ENCODE measurements at regions of chr4 and their contacts with region 1.

Region 1: GRCh38 chr4:139030614-139031235 is 15.1 kb downstream of the NOCT start:
- DNase-seq: peak; percentile 61
- ATAC-seq: peak; percentile 68
- H3K4me3 ChIP-seq: no peak overlapping the region
- H3K27ac ChIP-seq: no peak overlapping the region
- H3K4me1 ChIP-seq: peaks cover 0 to 4% of the 10 kb centered on the region in 2 experiments; a peak in 1 of 4 replicates
- H3K27me3 ChIP-seq: no peaks in the 10 kb centered on the region
- CTCF ChIP-seq: peak; percentile 61 to 83 (median 77); a peak in 5 of 6 replicates
- POLR2A ChIP-seq: no peak
- RAD21 ChIP-seq: peak; percentile 89

Region 2: DNA sequence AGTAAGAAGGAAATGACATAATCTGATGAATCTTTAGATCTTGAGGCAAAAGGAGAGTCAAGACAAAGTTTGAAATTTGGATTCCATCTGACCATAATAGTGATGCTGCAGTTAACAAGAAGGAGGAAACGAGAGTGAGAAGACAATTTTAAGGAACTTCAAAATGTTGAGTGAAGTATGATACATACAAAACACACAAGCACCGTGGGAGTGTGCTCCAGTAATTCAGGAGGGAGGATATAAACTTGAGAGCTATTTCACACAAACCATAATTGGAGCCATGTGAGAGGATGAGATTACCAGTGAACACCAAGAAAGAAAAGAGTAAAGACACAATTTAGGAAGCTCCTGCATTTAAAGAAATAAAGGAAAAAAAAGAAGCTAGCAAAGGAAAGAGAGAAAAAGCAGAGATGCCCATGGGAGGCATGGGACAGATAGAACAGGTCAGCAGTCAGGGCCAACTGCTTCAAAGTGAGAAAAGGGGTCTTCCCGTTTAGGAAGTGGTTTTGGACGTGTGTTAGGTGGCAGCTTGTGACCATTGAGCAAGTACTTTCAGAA is 637.9 kb before region 1 on chr4:
- CTCF ChIA-PET with region 1: no interaction called
- POLR2A ChIA-PET with region 1: no interaction called
- RAD21 ChIA-PET with region 1: no interaction called
- intact Hi-C with region 1: no loop called
- DNase-seq: no peak
- ATAC-seq: no peak
- H3K4me3 ChIP-seq: no peak overlapping the region
- H3K27ac ChIP-seq: no peak overlapping the region
- H3K4me1 ChIP-seq: peaks cover 0 to 3% of the 10 kb centered on the region in 2 experiments; a peak in 1 of 4 replicates
- H3K27me3 ChIP-seq: no peaks in the 10 kb centered on the region
- CTCF ChIP-seq: no peak
- POLR2A ChIP-seq: no peak
- RAD21 ChIP-seq: no peak

Region 3: GRCh38 chr4:139015269-139015947 is 15.3 kb before region 1 on chr4 and contains the start of gene NOCT:
- CTCF ChIA-PET with region 1: interaction called, 29 read pairs
- POLR2A ChIA-PET with region 1: interaction called, 6 read pairs
- RAD21 ChIA-PET with region 1: no interaction called
- intact Hi-C with region 1: no loop called
- DNase-seq: peak; percentile 82
- ATAC-seq: peak; percentile 87
- H3K4me3 ChIP-seq: peak within 1 kb of the TSS; percentile 88 to 93
- H3K27ac ChIP-seq: peak within 1 kb of the TSS; percentile 82
- H3K4me1 ChIP-seq: peaks cover 20 to 49% of the 10 kb centered on the region in 2 experiments
- H3K27me3 ChIP-seq: no peaks in the 10 kb centered on the region
- CTCF ChIP-seq: no peak
- POLR2A ChIP-seq: peak; percentile 91
- RAD21 ChIP-seq: no peak
- total RNA-seq, gene NOCT: 20.4 TPM

Region 4: GRCh38 chr4:139083956-139084803 is 53.5 kb after region 1 on chr4:
- CTCF ChIA-PET with region 1: interaction called, 14 read pairs
- POLR2A ChIA-PET with region 1: no interaction called
- RAD21 ChIA-PET with region 1: interaction called in 1 of 2 experiments, 4 read pairs
- intact Hi-C with region 1: loop called (anchors 2 kb)
- DNase-seq: peak; percentile 86
- ATAC-seq: peak; percentile 74
- H3K4me3 ChIP-seq: peak overlapping the region; percentile 75 to 96
- H3K27ac ChIP-seq: peak overlapping the region; percentile 97
- H3K4me1 ChIP-seq: peaks cover 4 to 21% of the 10 kb centered on the region in 2 experiments; a peak in 3 of 4 replicates
- H3K27me3 ChIP-seq: no peaks in the 10 kb centered on the region
- CTCF ChIP-seq: no peak; a peak in 2 of 6 replicates
- POLR2A ChIP-seq: no peak
- RAD21 ChIP-seq: no peak

Region 5: DNA sequence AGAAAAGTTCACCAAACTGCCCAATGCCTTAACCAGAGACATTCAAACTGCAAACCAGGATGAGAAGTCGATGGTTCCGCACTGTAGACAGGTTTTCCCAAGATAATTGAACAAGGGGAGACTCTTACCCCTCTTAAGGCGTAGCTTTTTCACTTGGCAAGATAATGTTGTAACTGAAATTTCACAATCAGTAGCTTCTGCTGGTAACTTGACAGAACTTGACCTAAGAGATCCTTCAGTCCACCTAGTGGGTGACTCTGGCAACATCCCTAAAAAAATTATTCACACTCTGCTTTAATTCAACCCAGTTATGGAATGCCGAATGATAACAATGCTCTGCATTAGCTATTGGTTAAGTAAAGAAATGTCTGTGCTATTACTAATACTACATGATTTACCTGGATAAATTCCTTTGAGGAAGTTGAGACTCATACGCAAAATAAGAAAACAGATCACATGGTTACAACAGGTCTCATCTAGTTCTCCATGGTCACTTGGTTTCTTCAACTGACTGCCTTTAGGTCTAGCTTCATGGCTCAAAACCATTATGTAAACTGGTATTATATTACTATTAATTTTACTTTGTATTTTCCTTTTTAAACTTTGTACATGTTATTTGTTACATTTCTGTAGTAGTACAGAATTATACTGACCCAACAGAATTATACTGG is 137.2 kb after region 1 on chr4:
- CTCF ChIA-PET with region 1: interaction called, 8 read pairs
- POLR2A ChIA-PET with region 1: no interaction called
- RAD21 ChIA-PET with region 1: interaction called in 1 of 2 experiments, 3 read pairs
- intact Hi-C with region 1: loop called (anchors 1 kb)
- DNase-seq: peak; percentile 35
- ATAC-seq: peak; percentile 80
- H3K4me3 ChIP-seq: no peak overlapping the region
- H3K27ac ChIP-seq: no peak overlapping the region
- H3K4me1 ChIP-seq: peaks cover 3 to 11% of the 10 kb centered on the region in 2 experiments; a peak in 3 of 4 replicates
- H3K27me3 ChIP-seq: no peaks in the 10 kb centered on the region
- CTCF ChIP-seq: peak; percentile 25 to 60 (median 55); a peak in 5 of 6 replicates
- POLR2A ChIP-seq: no peak
- RAD21 ChIP-seq: peak; percentile 54

Region 6: GRCh38 chr4:139229534-139230039 is 198.9 kb after region 1 on chr4:
- CTCF ChIA-PET with region 1: interaction called, 3 read pairs
- POLR2A ChIA-PET with region 1: no interaction called
- RAD21 ChIA-PET with region 1: no interaction called
- intact Hi-C with region 1: loop called (anchors 5 kb)
- DNase-seq: peak; percentile 50
- ATAC-seq: peak; percentile 81
- H3K4me3 ChIP-seq: no peak overlapping the region; a peak in 1 of 4 replicates
- H3K27ac ChIP-seq: no peak overlapping the region
- H3K4me1 ChIP-seq: peaks cover 2 to 9% of the 10 kb centered on the region in 2 experiments; a peak in 3 of 4 replicates
- H3K27me3 ChIP-seq: no peaks in the 10 kb centered on the region
- CTCF ChIP-seq: peak; percentile 67 to 71 (median 69); a peak in 5 of 6 replicates
- POLR2A ChIP-seq: no peak
- RAD21 ChIP-seq: peak; percentile 71

Region 7: DNA sequence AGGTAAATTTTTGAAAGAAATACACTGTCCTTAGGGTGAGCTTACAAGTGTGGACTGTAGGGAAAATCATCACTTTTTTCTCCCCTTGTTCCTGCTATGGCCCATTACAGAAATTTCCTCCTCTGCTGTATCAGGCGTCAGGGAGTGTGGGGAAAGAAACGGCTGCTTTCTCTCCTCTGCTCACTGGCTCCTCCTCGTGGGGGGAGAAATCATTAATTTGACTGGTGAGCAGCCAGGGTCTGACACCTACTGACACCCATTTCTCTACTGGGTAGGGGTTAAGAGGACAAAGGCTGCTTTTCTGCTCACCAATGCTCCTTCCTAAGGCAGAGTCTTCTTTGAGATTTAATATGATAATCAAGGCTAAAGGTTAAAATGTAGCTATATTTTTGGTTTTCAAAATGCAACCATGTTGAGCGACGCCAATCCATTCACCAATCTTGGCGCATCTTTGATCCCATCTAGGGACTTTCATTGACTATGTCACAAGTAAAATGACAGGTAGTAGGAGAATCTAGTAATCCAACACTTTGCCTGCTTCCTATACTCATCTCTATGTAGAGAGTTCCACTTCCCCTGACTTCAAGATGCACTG is 500.2 kb after region 1 on chr4:
- CTCF ChIA-PET with region 1: interaction called, 3 read pairs
- POLR2A ChIA-PET with region 1: no interaction called
- RAD21 ChIA-PET with region 1: no interaction called
- intact Hi-C with region 1: loop called (anchors 10 kb)
- DNase-seq: peak; percentile 13
- ATAC-seq: peak; percentile 98
- H3K4me3 ChIP-seq: no peak overlapping the region
- H3K27ac ChIP-seq: no peak overlapping the region
- H3K4me1 ChIP-seq: no peaks in the 10 kb centered on the region; a peak in 1 of 4 replicates
- H3K27me3 ChIP-seq: no peaks in the 10 kb centered on the region
- CTCF ChIP-seq: peak; percentile 70 to 72 (median 71); a peak in 5 of 6 replicates
- POLR2A ChIP-seq: no peak
- RAD21 ChIP-seq: peak; percentile 54